Endothelial cell of umbilical vein (primary cell): ENCODE measurements at regions of chr4 and their contacts with region 1.

Region 1: GRCh38 chr4:139651282-139652194 is 14.1 kb upstream of the MGST2 start:
- DNase-seq: peak; percentile 82
- H3K4me3 ChIP-seq: no peak overlapping the region
- H3K27ac ChIP-seq: no peak overlapping the region
- H3K4me1 ChIP-seq: no peaks in the 10 kb centered on the region
- H3K27me3 ChIP-seq: no peaks in the 10 kb centered on the region
- CTCF ChIP-seq: peak; percentile 85 to 88
- POLR2A ChIP-seq: no peak

Region 2: DNA sequence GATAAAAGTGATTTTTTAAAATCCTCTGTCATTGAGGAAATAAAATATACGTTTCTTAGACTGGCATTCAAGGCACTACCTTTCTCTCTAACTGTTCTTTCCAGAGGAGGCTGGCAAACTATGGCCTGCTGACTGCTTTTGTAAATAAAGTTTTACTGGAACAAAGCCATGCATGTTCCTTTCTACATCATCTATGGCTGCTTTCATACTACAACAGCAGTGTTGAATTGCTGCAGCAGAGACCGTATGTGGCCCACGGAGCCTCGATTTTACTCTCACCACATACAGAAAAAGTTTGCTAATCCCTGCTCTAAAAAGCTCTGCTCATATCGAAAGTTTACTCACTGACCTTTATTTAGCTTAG is 115.7 kb before region 1 on chr4:
- CTCF ChIA-PET with region 1: no interaction called
- POLR2A ChIA-PET with region 1: no interaction called
- dilution Hi-C with region 1: no loop called
- intact Hi-C with region 1: no loop called
- DNase-seq: no peak
- H3K4me3 ChIP-seq: no peak overlapping the region
- H3K27ac ChIP-seq: no peak overlapping the region
- H3K4me1 ChIP-seq: no peaks in the 10 kb centered on the region
- H3K27me3 ChIP-seq: no peaks in the 10 kb centered on the region
- CTCF ChIP-seq: no peak
- POLR2A ChIP-seq: no peak

Region 3: DNA sequence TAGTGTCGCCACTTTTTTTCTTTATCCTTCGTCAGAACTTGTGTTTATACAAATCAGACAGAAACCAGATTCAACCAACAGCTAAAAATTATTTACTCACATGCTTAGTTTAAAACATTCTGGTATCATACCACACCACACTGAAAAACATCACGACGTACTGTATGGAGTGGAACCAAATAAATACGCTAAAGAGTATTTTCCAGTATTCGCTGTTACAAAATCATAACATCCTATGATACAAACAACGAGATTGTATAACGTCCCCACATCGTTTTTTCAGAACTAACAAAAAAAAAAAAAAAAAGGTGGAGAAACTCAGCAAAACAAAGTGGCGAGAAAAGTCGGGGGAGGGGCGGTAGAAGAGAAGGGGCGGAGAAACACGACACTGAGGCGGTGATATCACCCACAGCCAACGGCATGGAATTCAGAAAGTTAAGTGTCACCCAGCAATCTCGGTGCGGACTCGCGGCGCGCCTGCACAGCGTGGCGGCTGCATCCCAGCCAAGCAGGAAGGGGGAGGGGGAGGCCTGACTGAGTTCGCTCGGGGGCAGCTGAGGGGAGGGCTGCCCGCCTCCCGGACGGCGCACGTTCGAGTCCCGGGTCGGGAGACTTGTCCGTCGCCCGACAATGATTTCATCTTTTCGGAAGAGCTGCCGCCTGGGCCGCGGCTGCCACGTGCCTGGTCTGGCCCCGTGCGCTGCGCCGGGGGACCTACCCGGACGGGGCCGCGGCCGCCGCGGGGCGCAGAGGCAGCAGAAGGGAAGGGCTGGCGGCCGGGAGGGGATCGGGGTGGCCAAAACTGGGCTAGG is 96.4 kb before region 1 on chr4:
- CTCF ChIA-PET with region 1: interaction called, 5 read pairs
- POLR2A ChIA-PET with region 1: no interaction called
- dilution Hi-C with region 1: no loop called
- intact Hi-C with region 1: loop called (anchors 2 kb)
- DNase-seq: peak; percentile 96
- H3K4me3 ChIP-seq: peak overlapping the region; percentile 65 to 91 (median 89)
- H3K27ac ChIP-seq: peak overlapping the region; percentile 77
- H3K4me1 ChIP-seq: peaks cover 20% of the 10 kb centered on the region
- H3K27me3 ChIP-seq: peaks cover 15 to 23% of the 10 kb centered on the region in 2 experiments
- CTCF ChIP-seq: no peak
- POLR2A ChIP-seq: peak; percentile 78

Region 4: DNA sequence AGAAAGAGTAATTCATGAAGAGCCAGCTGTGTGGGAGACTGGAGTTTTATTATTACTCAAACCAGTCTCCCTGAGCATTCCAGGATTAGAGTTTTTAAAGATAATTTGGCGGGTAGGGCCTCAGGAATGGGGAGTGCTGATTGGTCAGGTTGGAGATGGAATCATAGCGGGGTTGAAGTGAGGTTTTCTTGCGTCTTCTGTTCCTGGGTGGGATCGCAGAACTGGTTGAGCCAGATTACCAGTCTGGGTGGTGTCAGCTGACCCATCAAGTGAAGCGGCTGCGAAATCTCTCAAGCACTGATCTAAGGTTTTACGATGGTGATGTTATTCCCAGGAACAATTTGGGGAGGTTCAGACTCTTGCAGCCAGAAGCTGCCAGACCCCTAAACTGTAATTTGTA is 70.5 kb before region 1 on chr4:
- CTCF ChIA-PET with region 1: interaction called, 11 read pairs
- POLR2A ChIA-PET with region 1: no interaction called
- dilution Hi-C with region 1: no loop called
- intact Hi-C with region 1: no loop called
- DNase-seq: no peak
- H3K4me3 ChIP-seq: no peak overlapping the region
- H3K27ac ChIP-seq: no peak overlapping the region
- H3K4me1 ChIP-seq: no peaks in the 10 kb centered on the region
- H3K27me3 ChIP-seq: peaks cover 2 to 19% of the 10 kb centered on the region in 2 experiments
- CTCF ChIP-seq: no peak
- POLR2A ChIP-seq: no peak